Heart left ventricle (tissue), 16 donors: ENCODE measurements at regions of chr18 and their contacts with region 1.

Region 1: DNA sequence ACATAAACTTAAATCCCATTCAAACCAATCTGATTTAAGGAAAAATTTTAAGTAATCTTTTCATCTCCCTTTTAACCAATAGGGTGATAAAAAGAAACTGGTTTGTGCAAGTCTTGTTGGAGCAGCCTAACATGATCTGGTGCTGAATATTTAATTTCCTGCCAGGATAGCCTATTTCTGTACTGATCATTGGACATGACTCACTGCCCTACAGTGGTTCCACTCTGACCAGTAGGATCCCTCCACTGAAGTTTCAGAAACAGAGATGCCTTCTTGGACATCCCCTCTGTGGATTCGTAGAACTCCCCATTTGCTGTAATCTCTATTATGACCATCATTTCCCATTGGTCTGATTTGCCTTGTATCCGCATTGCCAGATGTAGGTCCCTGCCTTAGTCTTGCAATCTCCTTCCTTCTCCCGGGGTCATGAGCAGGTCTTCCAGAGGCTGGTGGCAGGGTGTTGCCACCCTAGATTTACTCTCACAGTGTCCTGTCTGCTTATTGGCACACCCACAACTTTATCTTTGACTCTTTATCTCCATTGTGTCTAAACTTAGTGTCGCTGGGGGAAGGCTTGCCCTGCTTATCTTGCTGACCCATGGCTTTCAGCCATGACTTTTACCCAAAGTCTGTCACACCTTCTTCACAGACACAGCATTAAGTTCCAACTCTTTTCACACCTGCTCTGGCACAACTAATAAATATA is 12.3 kb upstream of the SETBP1 start:
- DNase-seq: peak in 1 of 5 donors; percentile 37
- ATAC-seq: peak; percentile 83 to 98 (median 90)
- H3K4me3 ChIP-seq: no peak overlapping the region
- H3K27ac ChIP-seq: no peak overlapping the region
- H3K4me1 ChIP-seq: peaks cover 0 to 15% (median 0%) of the 10 kb centered on the region in 12 donors
- H3K27me3 ChIP-seq: no peaks in the 10 kb centered on the region
- CTCF ChIP-seq: no peak
- POLR2A ChIP-seq: no peak

Region 2: GRCh38 chr18:44594799-44595467 is 73.5 kb before region 1 on chr18:
- intact Hi-C with region 1: loop called in 3 of 10 experiments (anchors 5 to 10 kb)
- DNase-seq: no peak
- ATAC-seq: peak; percentile 63 to 89 (median 74)
- H3K4me3 ChIP-seq: no peak overlapping the region
- H3K27ac ChIP-seq: peak overlapping the region in 3 of 12 donors; percentile 13 to 34 (median 34)
- H3K4me1 ChIP-seq: peaks cover 0 to 60% (median 17%) of the 10 kb centered on the region in 12 donors
- H3K27me3 ChIP-seq: no peaks in the 10 kb centered on the region
- CTCF ChIP-seq: no peak
- POLR2A ChIP-seq: no peak